T-cell (primary cell): ENCODE measurements at regions of chr19 and their contacts with region 1.

Region 1: GRCh38 chr19:14505488-14506432 is 9.8 kb upstream of the GIPC1 start:
- DNase-seq: peak; percentile 45 to 83 (median 67)
- ATAC-seq: peak; percentile 24 to 41 (median 30)
- H3K4me3 ChIP-seq: peak overlapping the region in 1 of 2 donors; percentile 5
- H3K4me3 Mint-ChIP-seq: peak overlapping the region; percentile 4 to 64 (median 54)
- H3K27ac ChIP-seq: peak overlapping the region; percentile 62
- H3K27ac Mint-ChIP-seq: peak overlapping the region; percentile 97 to 99
- H3K4me1 ChIP-seq: peaks cover 21 to 57% of the 10 kb centered on the region in 2 experiments
- H3K4me1 Mint-ChIP-seq: peaks cover 63 to 69% (median 64%) of the 10 kb centered on the region in 3 donors
- H3K27me3 ChIP-seq: peaks cover 0 to 2% of the 10 kb centered on the region in 2 experiments
- H3K27me3 Mint-ChIP-seq: no peaks in the 10 kb centered on the region

Region 2: GRCh38 chr19:14472202-14472938 is 33.4 kb before region 1 on chr19:
- CTCF ChIA-PET with region 1: interaction called in 1 of 2 experiments, 4 read pairs
- POLR2A ChIA-PET with region 1: interaction called in 1 of 2 experiments, 12 read pairs
- DNase-seq: peak; percentile 46 to 90 (median 81)
- ATAC-seq: peak; percentile 74 to 82 (median 76)
- H3K4me3 ChIP-seq: peak overlapping the region; percentile 18 to 60
- H3K4me3 Mint-ChIP-seq: peak overlapping the region; percentile 13 to 77 (median 36)
- H3K27ac ChIP-seq: no peak overlapping the region
- H3K27ac Mint-ChIP-seq: no peak overlapping the region
- H3K4me1 ChIP-seq: peaks cover 3 to 52% of the 10 kb centered on the region in 2 experiments
- H3K4me1 Mint-ChIP-seq: peaks cover 28 to 39% (median 29%) of the 10 kb centered on the region in 3 donors
- H3K27me3 ChIP-seq: peaks cover 0 to 43% of the 10 kb centered on the region in 2 experiments
- H3K27me3 Mint-ChIP-seq: peaks cover 14 to 20% of the 10 kb centered on the region in 2 donors

Region 3: GRCh38 chr19:14517840-14518505 is 12.2 kb after region 1 on chr19 and contains the start of gene DNAJB1:
- CTCF ChIA-PET with region 1: interaction called in 1 of 2 experiments, 12 read pairs
- POLR2A ChIA-PET with region 1: interaction called, 6 to 35 read pairs
- DNase-seq: peak in 27 of 35 experiments; percentile 27 to 99 (median 44)
- ATAC-seq: peak; percentile 36 to 71 (median 62)
- H3K4me3 ChIP-seq: peak within 1 kb of the TSS; percentile 88 to 89
- H3K4me3 Mint-ChIP-seq: peak within 1 kb of the TSS; percentile 90 to 94 (median 93)
- H3K27ac ChIP-seq: peak within 1 kb of the TSS; percentile 99
- H3K27ac Mint-ChIP-seq: peak within 1 kb of the TSS; percentile 95 to 96
- H3K4me1 ChIP-seq: peaks cover 28 to 74% of the 10 kb centered on the region in 2 experiments
- H3K4me1 Mint-ChIP-seq: peaks cover 71 to 74% (median 74%) of the 10 kb centered on the region in 3 donors
- H3K27me3 ChIP-seq: no peaks in the 10 kb centered on the region
- H3K27me3 Mint-ChIP-seq: no peaks in the 10 kb centered on the region
- total RNA-seq, gene DNAJB1: 158 to 575 (median 165) TPM

Region 4: DNA sequence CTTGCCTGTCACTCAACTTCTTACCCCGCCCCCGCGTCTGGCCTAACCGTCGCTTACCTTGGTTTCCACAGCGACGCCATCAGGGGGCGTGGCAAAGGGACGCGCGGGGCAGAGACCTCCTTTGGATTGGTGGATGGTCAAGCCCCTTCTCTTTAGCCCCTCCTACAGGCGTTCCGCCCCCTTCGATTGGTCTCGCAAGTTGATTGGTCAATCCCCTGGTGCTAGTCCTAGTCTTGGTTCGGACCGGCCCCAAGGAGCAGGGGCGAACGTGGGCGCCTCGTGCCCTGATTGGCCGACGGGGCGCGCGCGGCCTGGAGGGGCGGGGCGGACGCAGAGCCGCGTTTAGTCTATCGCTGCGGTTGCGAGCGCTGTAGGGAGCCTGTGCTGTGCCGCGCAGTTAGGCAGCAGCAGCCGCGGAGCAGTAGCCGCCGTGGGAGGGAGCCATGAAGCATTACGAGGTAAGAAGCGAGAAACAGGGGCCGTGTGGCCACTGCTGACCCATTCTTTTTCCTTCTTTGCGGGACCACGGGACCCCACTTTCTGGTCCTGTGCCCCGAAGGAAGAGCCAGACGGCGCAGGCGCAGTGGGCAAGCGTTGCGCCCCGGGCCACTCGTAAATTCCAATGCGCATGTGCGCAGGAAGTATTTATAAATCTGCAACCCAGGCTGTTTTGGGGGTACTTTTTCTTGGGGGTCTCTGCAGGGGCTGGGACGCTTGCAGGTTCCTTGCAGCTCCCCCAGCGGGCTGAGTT is 23.7 kb after region 1 on chr19 and contains the start of gene TECR:
- CTCF ChIA-PET with region 1: interaction called in 1 of 2 experiments, 4 read pairs
- POLR2A ChIA-PET with region 1: interaction called, 10 read pairs
- DNase-seq: peak; percentile 99 to 100 (median 100)
- ATAC-seq: peak; percentile 90 to 97 (median 95)
- H3K4me3 ChIP-seq: peak within 1 kb of the TSS; percentile 83 to 89
- H3K4me3 Mint-ChIP-seq: peak within 1 kb of the TSS; percentile 84 to 93 (median 92)
- H3K27ac ChIP-seq: peak within 1 kb of the TSS; percentile 92
- H3K27ac Mint-ChIP-seq: peak within 1 kb of the TSS; percentile 97 to 98
- H3K4me1 ChIP-seq: peaks cover 11 to 49% of the 10 kb centered on the region in 2 experiments
- H3K4me1 Mint-ChIP-seq: peaks cover 33 to 67% (median 57%) of the 10 kb centered on the region in 3 donors
- H3K27me3 ChIP-seq: no peaks in the 10 kb centered on the region
- H3K27me3 Mint-ChIP-seq: no peaks in the 10 kb centered on the region
- total RNA-seq, gene TECR: 137 to 207 (median 171) TPM

Region 5: DNA sequence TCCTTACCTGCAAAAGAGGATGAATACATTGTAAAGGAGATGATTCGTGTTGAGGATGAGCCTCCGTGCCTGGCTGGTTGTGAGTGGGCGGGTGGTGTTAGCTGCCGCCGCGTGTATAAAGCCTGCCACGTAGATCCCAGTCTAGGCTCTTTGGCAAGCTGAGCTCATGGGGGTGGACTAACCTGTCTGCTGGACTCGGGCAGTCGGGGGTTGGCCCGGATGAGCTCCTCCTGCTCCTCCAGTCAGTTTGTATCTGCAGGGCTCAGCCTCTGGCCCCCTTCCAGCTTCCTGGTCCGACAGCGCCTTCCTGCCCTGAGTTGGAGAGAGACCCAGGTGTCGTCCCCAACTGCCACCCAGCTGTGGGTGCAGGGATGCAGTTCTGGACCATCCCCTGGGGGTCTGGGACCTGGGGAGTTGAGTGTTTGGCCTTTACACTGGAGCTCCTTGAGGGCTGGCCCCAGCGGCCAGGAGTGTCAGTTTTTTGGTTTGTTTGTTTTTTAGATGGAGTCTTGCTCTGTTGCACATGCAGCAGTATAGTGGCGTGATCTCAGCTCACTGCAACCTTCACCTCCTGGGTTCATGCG is 44.5 kb after region 1 on chr19:
- CTCF ChIA-PET with region 1: interaction called in 1 of 2 experiments, 22 read pairs
- POLR2A ChIA-PET with region 1: interaction called, 3 to 5 read pairs
- DNase-seq: no peak
- ATAC-seq: no peak
- H3K4me3 ChIP-seq: no peak overlapping the region
- H3K4me3 Mint-ChIP-seq: no peak overlapping the region
- H3K27ac ChIP-seq: no peak overlapping the region
- H3K27ac Mint-ChIP-seq: peak overlapping the region; percentile 73 to 92
- H3K4me1 ChIP-seq: peaks cover 10 to 51% of the 10 kb centered on the region in 2 experiments
- H3K4me1 Mint-ChIP-seq: peaks cover 48 to 52% (median 49%) of the 10 kb centered on the region in 3 donors
- H3K27me3 ChIP-seq: no peaks in the 10 kb centered on the region
- H3K27me3 Mint-ChIP-seq: no peaks in the 10 kb centered on the region